Natural killer cell (primary cell): ENCODE measurements at regions of chr9 and their contacts with region 1.

Region 1: DNA sequence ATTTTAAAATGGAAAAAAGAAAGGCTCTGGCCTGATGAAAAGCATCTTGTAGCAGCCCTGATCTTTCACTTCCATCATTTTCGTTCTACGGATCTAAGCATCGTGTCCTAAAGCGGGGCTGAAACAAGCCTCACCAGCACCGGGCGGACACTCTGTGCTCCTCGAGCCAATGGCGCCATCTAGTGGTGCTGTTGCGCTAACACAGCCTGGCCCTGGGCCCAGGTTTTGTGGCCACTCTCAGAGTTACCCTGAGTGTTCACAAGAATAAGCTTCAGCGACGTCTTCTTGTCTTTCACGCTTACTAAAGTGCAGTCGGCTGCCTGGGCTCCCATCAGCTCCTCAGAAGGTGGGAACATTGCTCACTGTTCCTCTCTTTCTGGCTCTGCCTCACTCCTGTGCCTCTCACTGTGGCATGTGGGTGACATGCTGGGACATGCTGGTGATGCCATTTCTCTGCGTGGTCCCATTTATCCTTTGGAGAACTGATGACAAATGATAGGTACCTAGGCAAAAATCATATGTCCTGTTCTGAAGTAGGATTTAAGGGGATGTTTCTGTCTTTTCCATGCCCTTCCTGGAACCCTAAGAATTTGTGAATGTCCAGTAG is 32.7 kb downstream of the DMRT3 start:
- DNase-seq: peak; percentile 60 to 78
- ATAC-seq: peak; percentile 92 to 98 (median 92)
- H3K4me3 ChIP-seq: no peak overlapping the region
- H3K4me3 Mint-ChIP-seq: no peak overlapping the region
- H3K27ac ChIP-seq: no peak overlapping the region
- H3K27ac Mint-ChIP-seq: no peak overlapping the region
- H3K4me1 ChIP-seq: peaks cover 3% of the 10 kb centered on the region
- H3K4me1 Mint-ChIP-seq: peaks cover 10 to 11% of the 10 kb centered on the region in 2 donors
- H3K27me3 ChIP-seq: no peaks in the 10 kb centered on the region
- H3K27me3 Mint-ChIP-seq: peaks cover 11 to 32% of the 10 kb centered on the region in 2 donors
- CTCF ChIP-seq: peak; percentile 89

Region 2: DNA sequence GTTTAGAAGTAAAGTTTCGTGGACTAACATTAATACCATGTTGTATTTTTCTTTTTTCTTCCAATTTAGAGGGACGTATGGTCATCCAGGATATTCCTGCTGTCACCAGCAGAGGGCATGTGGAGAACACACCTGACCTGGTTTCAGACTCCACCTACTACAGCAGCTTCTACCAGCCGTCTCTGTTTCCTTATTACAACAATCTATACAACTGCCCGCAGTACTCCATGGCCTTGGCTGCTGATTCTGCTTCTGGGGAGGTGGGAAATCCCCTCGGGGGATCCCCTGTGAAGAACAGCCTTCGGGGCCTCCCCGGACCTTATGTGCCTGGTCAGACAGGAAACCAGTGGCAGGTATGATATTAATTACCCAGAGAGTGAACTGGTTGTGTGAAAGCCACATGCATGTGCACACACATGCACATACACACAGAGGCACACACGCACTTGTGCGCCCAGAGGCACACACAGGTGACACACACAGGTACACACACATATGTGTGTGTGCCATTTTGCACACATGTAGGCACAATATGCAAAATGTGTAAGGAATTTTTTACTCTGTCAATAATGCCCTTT is 115.3 kb before region 1 on chr9:
- intact Hi-C with region 1: loop called (anchors 5 kb)
- DNase-seq: peak; percentile 30 to 72
- ATAC-seq: peak; percentile 88 to 97 (median 93)
- H3K4me3 ChIP-seq: no peak overlapping the region
- H3K4me3 Mint-ChIP-seq: peak overlapping the region; percentile 45
- H3K27ac ChIP-seq: no peak overlapping the region
- H3K27ac Mint-ChIP-seq: peak overlapping the region; percentile 49 to 56
- H3K4me1 ChIP-seq: peaks cover 11% of the 10 kb centered on the region
- H3K4me1 Mint-ChIP-seq: peaks cover 7% of the 10 kb centered on the region in 2 donors
- H3K27me3 ChIP-seq: peaks cover 4% of the 10 kb centered on the region
- H3K27me3 Mint-ChIP-seq: peaks cover 26 to 37% of the 10 kb centered on the region in 2 donors
- CTCF ChIP-seq: peak; percentile 63